Astrocyte of the cerebellum (primary cell): ENCODE measurements at regions of chr21 and their contacts with region 1.

Region 1: GRCh38 chr21:31273278-31273677 is 70.8 kb downstream of the TIAM1 start:
- DNase-seq: no peak
- H3K4me3 ChIP-seq: no peak overlapping the region
- CTCF ChIP-seq: no peak

Region 2: DNA sequence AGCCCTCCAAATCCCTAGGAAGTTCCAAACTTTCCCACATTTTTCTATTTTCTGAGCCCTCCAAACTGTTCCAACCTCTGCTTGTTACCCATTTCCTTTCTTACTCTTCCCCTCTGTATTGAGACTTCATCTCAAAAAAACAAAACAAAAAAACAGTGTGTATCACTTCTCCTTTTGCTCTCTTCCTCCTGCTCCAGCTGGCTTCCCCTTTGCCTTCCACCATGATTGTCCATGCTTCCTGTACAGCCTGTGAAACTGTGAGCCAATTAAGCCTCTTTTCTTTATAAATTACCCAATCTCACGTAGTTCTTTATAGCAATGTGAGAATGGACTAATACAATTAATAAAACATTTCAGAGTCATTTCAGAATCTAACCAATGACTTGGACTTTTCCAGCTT is 165.4 kb before region 1 on chr21:
- in situ Hi-C with region 1: no loop called
- DNase-seq: no peak
- H3K4me3 ChIP-seq: no peak overlapping the region
- CTCF ChIP-seq: no peak

Region 3: GRCh38 chr21:31220573-31220972 is 52.7 kb before region 1 on chr21:
- in situ Hi-C with region 1: loop called (anchors 5 kb)
- DNase-seq: no peak
- H3K4me3 ChIP-seq: no peak overlapping the region
- CTCF ChIP-seq: no peak

Region 4: DNA sequence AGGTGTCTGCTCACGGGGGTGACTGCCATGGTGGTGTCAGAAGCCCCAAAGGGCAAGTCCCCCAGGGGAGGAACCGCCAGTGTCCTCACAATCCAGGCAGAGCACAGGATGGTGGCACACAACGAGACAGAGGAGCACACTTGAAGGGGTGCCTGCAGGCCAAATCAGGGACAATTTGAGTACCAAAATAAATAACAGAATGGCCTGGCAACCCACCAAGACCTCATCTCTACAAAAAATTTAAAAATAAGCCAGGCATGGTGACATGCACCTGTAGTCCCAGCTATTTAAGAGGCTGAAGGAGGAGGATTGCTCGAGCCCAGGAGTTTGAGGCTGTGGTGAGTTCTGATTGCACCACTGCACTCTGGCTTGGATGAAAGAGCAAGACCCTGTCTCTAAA is 32.6 kb after region 1 on chr21:
- in situ Hi-C with region 1: no loop called
- DNase-seq: no peak
- H3K4me3 ChIP-seq: no peak overlapping the region
- CTCF ChIP-seq: no peak